ENCODE measurements at regions of chr2 and their contacts with region 1.

Region 1: DNA sequence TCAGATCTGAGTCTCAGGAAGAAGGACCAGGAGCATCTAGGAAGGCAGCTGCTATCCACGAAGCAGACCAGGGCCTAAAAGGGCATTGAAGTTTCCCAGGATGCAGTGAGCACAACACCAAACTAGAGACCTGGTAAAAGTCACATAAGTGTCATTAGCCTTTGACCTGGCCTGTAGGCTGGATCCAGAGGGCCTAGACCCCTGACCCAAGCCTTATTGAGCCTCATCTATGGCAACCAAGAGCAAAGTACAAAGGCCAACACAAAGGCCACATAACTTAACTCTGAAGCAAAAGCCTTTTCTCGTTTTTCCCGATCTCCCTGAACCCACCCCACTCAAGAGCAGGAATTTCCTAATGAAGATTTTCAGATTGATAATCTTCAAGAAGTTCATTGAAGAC is 127.3 kb upstream of the SRD5A2 start:
- DNase-seq: no peak
- H3K4me3 Mint-ChIP-seq: no peak overlapping the region
- H3K27ac Mint-ChIP-seq: no peak overlapping the region
- H3K4me1 Mint-ChIP-seq: no peaks in the 10 kb centered on the region
- H3K27me3 Mint-ChIP-seq: no peaks in the 10 kb centered on the region

Region 2: GRCh38 chr2:31728406-31729064 is 20.5 kb after region 1 on chr2:
- CTCF ChIA-PET with region 1: no interaction called
- intact Hi-C with region 1: loop called (anchors 1 kb)
- DNase-seq: no peak
- H3K4me3 Mint-ChIP-seq: no peak overlapping the region
- H3K27ac Mint-ChIP-seq: no peak overlapping the region
- H3K4me1 Mint-ChIP-seq: no peaks in the 10 kb centered on the region
- H3K27me3 Mint-ChIP-seq: no peaks in the 10 kb centered on the region

Measured in activated naive CD4-positive, alpha-beta T cell treated with anti-CD3 and anti-CD28 coated beads for 36 hours (primary cell).